ENCODE measurements at regions of chr13 and their contacts with region 1.

Region 1: GRCh38 chr13:52128714-52129700 is at the start of gene NEK5:
- DNase-seq: peak; percentile 70
- H3K4me3 Mint-ChIP-seq: peak within 1 kb of the TSS; percentile 76
- H3K27ac Mint-ChIP-seq: no peak within 1 kb of the TSS
- H3K4me1 Mint-ChIP-seq: peaks cover 13% of the 10 kb centered on the region
- H3K27me3 Mint-ChIP-seq: no peaks in the 10 kb centered on the region
- total RNA-seq, gene NEK5: 0.05 TPM in 1 of 2 experiments, not detected in the other

Region 2: DNA sequence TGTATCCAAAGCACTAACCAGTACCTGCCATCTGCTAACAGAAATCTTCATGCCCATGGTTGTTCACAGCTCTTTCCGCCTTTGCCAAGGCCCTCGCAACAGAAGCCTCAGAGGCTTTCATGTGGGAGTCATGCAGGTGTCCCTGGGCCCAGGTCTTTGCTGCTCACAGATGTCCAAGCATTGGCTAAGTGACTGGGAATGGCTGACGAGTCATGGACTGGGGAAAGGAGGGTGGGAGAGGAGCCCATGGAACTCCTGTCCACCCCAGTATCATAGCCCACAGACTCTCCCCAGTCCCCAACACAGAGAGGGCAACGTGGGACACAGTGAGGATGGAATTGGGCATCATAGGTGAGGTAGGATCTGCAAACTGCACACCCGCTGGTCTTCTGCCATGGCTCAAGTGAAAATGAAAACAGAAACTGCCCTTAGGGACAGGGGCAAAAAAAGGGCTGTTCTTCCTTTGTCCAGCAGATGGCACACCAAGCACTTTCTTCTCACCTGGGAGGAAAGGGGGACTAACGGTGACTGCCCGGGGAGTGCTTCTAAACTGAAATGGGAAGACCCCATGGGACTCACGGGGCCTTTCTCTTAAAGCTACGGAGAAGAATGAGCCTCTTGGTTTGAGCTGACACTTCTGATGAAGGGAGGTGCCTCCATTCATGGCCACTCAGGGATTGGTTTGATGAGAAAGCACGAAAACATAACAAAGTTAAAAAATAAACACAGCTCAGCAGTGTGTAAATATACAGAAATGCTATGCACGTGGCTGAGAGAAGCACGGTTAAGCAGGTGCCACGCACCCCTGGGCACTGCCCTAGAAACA is 314.0 kb before region 1 on chr13:
- CTCF ChIA-PET with region 1: interaction called, 18 read pairs
- POLR2A ChIA-PET with region 1: no interaction called
- intact Hi-C with region 1: loop called (anchors 2 kb)
- DNase-seq: peak; percentile 88
- H3K4me3 Mint-ChIP-seq: peak overlapping the region; percentile 48
- H3K27ac Mint-ChIP-seq: peak overlapping the region; percentile 66
- H3K4me1 Mint-ChIP-seq: peaks cover 67% of the 10 kb centered on the region
- H3K27me3 Mint-ChIP-seq: no peaks in the 10 kb centered on the region

Region 3: DNA sequence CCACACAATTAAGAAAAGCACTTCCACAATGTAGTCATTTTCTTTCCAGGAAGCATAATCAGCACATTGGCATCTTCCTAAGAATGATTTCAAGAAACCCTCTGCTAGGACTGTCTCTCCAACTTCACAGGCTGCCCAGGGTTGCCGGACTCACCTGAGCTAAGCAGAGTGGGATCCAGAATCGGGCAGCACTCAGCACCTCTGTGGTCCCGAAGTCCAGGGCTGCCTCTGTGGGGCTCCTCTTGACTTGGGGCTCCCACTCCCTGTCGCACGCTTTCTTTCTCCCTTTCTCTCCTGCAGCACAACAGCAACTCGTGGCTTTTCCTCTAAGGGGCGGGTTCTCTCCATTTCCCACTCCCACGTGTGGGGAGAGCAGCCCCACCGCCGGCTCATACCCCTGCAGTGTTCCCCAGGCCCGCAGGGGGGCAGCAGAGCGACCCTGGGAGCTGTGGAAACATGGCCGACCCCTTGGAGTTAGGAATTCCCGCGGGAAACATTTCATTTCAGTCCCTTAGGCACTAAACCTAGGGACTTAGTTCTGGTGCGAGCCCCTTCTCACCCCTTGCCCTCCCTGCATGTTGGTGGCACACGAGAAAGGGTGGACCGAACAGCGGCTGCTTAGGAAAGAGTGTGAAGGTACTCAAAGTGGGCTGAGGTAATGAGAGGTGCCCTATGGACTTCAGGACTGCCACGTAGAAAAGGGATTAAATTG is 284.0 kb before region 1 on chr13 and contains the start of gene TMEM272:
- CTCF ChIA-PET with region 1: interaction called, 5 read pairs
- POLR2A ChIA-PET with region 1: no interaction called
- intact Hi-C with region 1: loop called (anchors 2 kb)
- DNase-seq: peak; percentile 74
- H3K4me3 Mint-ChIP-seq: peak within 1 kb of the TSS; percentile 27
- H3K27ac Mint-ChIP-seq: no peak within 1 kb of the TSS
- H3K4me1 Mint-ChIP-seq: peaks cover 16% of the 10 kb centered on the region
- H3K27me3 Mint-ChIP-seq: peaks cover 4% of the 10 kb centered on the region
- total RNA-seq, gene TMEM272: 0.10 to 0.31 TPM

Region 4: GRCh38 chr13:51895906-51896888 is 232.8 kb before region 1 on chr13:
- CTCF ChIA-PET with region 1: interaction called, 47 read pairs
- POLR2A ChIA-PET with region 1: no interaction called
- intact Hi-C with region 1: loop called (anchors 1 kb)
- DNase-seq: peak; percentile 66
- H3K4me3 Mint-ChIP-seq: no peak overlapping the region
- H3K27ac Mint-ChIP-seq: no peak overlapping the region
- H3K4me1 Mint-ChIP-seq: no peaks in the 10 kb centered on the region
- H3K27me3 Mint-ChIP-seq: peaks cover 12% of the 10 kb centered on the region

Region 5: DNA sequence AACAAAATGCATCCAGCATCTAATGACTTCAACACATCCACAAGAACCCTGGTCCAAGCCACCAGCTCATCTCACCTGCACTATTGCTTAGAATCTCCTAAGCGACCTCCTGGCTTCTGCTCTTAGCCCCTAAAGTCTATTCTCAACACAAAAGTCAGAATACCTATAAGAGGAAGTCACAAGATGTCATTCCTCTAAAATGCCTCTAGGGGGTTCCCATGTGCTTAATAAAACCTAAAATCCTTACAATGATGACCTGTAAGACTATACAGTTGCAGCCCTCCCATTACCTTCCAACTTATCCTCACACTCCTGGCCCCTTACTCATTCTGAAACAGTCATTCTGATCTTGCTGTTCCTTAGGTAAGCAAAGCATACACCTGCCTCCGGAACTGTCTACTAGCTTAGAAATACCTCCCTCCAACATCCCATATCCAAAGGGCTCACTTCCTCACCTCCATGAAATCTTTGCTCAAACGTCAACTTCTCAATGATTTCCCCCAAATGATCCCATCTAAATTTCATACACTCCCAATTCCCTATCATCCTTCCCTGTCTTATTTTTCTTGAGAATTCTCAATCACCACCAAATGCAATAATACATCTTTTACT is 127.8 kb before region 1 on chr13:
- CTCF ChIA-PET with region 1: interaction called, 24 read pairs
- POLR2A ChIA-PET with region 1: no interaction called
- intact Hi-C with region 1: loop called (anchors 1 kb)
- DNase-seq: no peak
- H3K4me3 Mint-ChIP-seq: no peak overlapping the region
- H3K27ac Mint-ChIP-seq: no peak overlapping the region
- H3K4me1 Mint-ChIP-seq: no peaks in the 10 kb centered on the region
- H3K27me3 Mint-ChIP-seq: peaks cover 9% of the 10 kb centered on the region

Region 6: GRCh38 chr13:52070929-52071523 is 58.0 kb before region 1 on chr13:
- CTCF ChIA-PET with region 1: interaction called, 4 read pairs
- POLR2A ChIA-PET with region 1: no interaction called
- intact Hi-C with region 1: loop called (anchors 1 kb)
- DNase-seq: peak; percentile 53
- H3K4me3 Mint-ChIP-seq: no peak overlapping the region
- H3K27ac Mint-ChIP-seq: no peak overlapping the region
- H3K4me1 Mint-ChIP-seq: peaks cover 8% of the 10 kb centered on the region
- H3K27me3 Mint-ChIP-seq: peaks cover 19% of the 10 kb centered on the region

Region 7: GRCh38 chr13:52194184-52194868 is 65.3 kb after region 1 on chr13:
- CTCF ChIA-PET with region 1: interaction called, 3 read pairs
- POLR2A ChIA-PET with region 1: no interaction called
- intact Hi-C with region 1: loop called (anchors 2 kb)
- DNase-seq: peak; percentile 93
- H3K4me3 Mint-ChIP-seq: peak overlapping the region; percentile 97
- H3K27ac Mint-ChIP-seq: peak overlapping the region; percentile 91
- H3K4me1 Mint-ChIP-seq: peaks cover 22% of the 10 kb centered on the region
- H3K27me3 Mint-ChIP-seq: no peaks in the 10 kb centered on the region

Region 8: DNA sequence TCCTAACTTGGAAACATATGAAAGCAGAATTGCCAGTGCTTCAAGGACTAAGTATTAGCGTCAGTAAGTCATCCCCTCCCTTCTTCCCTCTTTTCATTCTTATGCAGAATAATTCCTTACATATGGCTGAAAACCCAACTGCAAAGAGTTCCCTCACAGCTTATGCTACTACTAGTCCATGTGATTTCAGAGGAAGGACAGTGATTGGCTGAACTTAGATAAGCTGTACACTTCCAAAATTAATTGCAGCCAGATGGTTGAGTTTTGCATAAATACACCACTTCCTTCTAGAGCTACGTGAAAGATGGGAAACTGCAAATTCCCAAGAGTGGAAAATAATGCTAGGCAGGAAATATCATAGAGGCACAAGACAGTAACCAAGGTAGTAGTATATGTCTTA is 1630.0 kb after region 1 on chr13:
- CTCF ChIA-PET with region 1: no interaction called
- POLR2A ChIA-PET with region 1: no interaction called
- intact Hi-C with region 1: no loop called
- DNase-seq: no peak
- H3K4me3 Mint-ChIP-seq: no peak overlapping the region
- H3K27ac Mint-ChIP-seq: no peak overlapping the region
- H3K4me1 Mint-ChIP-seq: no peaks in the 10 kb centered on the region
- H3K27me3 Mint-ChIP-seq: no peaks in the 10 kb centered on the region

Measured in activated CD4-positive, alpha-beta memory T cell treated with anti-CD3 and anti-CD28 coated beads for 36 hours (primary cell).